Left lung (tissue), 14 donors: ENCODE measurements at regions of chr3 and their contacts with region 1.

Region 1: GRCh38 chr3:123559040-123559861 is 25.6 kb downstream of the HACD2 start:
- DNase-seq: peak in 2 of 4 donors; percentile 49 to 64
- ATAC-seq: peak; percentile 84
- H3K4me3 ChIP-seq: no peak overlapping the region
- H3K27ac ChIP-seq: no peak overlapping the region
- H3K4me1 ChIP-seq: no peaks in the 10 kb centered on the region
- H3K27me3 ChIP-seq: no peaks in the 10 kb centered on the region
- CTCF ChIP-seq: peak; percentile 77 to 79

Region 2: DNA sequence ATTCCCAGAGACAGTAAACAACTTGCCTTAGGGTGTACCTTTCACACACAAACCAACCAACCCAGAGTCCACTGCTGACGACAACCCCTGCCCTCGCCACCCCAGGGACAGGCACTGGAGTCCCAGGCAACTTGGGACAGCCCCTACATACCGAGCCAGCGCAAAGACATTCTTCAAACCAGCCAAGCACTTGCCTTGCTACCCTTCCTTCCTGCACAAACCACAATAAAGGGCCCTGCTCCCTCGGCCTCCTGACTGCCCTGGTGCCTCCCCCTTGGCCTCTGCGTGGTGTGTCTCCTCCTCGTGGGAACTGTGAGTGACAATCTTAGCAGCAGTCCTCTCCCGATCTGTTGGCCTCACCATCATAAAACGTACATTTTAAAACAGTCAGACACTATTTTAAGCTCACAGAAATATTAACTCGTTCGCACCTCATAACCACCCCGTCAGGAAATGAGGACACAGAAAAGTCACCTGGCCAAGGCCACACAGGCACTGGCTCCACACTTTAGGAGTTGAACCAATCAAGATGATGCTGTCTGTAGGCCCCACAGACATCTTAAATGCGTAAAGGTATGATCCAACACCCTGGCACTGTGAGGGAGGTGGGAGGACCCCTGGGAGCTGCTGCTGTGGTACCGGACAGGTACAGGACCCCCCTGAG is 224.1 kb before region 1 on chr3:
- intact Hi-C with region 1: loop called in 1 of 2 experiments (anchors 10 kb)
- DNase-seq: peak in 2 of 4 donors; percentile 7 to 46
- ATAC-seq: no peak
- H3K4me3 ChIP-seq: no peak overlapping the region
- H3K27ac ChIP-seq: no peak overlapping the region
- H3K4me1 ChIP-seq: no peaks in the 10 kb centered on the region
- H3K27me3 ChIP-seq: no peaks in the 10 kb centered on the region
- CTCF ChIP-seq: no peak

Region 3: GRCh38 chr3:123382846-123383746 is 176.2 kb before region 1 on chr3:
- intact Hi-C with region 1: no loop called
- DNase-seq: peak in 1 of 4 donors; percentile 24
- ATAC-seq: no peak
- H3K4me3 ChIP-seq: no peak overlapping the region
- H3K27ac ChIP-seq: no peak overlapping the region
- H3K4me1 ChIP-seq: no peaks in the 10 kb centered on the region
- H3K27me3 ChIP-seq: peaks cover 0 to 5% of the 10 kb centered on the region in 2 donors
- CTCF ChIP-seq: no peak

Region 4: DNA sequence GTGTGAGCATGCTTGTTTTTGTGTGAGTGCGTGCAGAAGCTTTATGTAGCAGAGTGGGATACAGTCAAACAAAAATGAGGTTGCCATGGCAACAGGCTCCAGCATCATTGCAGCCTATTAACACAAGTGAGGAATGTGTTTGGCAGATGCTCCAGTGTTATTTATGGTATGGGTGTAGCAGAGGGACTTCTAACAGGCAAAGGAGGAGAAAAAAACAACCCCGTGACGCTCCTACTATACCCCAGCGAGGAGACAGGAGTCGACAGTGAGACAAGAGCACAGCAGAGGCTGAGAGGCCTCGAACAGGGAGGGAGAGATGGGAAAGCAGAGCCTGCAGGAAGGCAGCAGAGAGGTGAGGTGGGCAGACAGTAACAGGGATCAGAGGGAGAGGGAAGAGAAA is 115.2 kb before region 1 on chr3:
- intact Hi-C with region 1: no loop called
- DNase-seq: no peak
- ATAC-seq: no peak
- H3K4me3 ChIP-seq: no peak overlapping the region
- H3K27ac ChIP-seq: no peak overlapping the region
- H3K4me1 ChIP-seq: peaks cover 0 to 10% of the 10 kb centered on the region in 2 donors
- H3K27me3 ChIP-seq: peaks cover 16 to 61% of the 10 kb centered on the region in 2 donors
- CTCF ChIP-seq: no peak

Region 5: GRCh38 chr3:123791898-123792297 is 232.6 kb after region 1 on chr3:
- intact Hi-C with region 1: no loop called
- DNase-seq: no peak
- ATAC-seq: no peak
- H3K4me3 ChIP-seq: no peak overlapping the region
- H3K27ac ChIP-seq: peak overlapping the region in 1 of 2 donors; percentile 33
- H3K4me1 ChIP-seq: peaks cover 0 to 9% of the 10 kb centered on the region in 2 donors
- H3K27me3 ChIP-seq: no peaks in the 10 kb centered on the region
- CTCF ChIP-seq: no peak